ENCODE measurements at regions of chr11 and their contacts with region 1.

Region 1: GRCh38 chr11:87352759-87353707 is 315.3 kb downstream of the TMEM135 start:
- DNase-seq: peak; percentile 51
- ATAC-seq: peak; percentile 98
- H3K4me3 ChIP-seq: no peak overlapping the region; a peak in 1 of 6 replicates
- H3K27ac ChIP-seq: no peak overlapping the region
- H3K4me1 ChIP-seq: no peaks in the 10 kb centered on the region
- H3K27me3 ChIP-seq: no peaks in the 10 kb centered on the region
- CTCF ChIP-seq: peak; percentile 98
- EP300 ChIP-seq: no peak
- POLR2A ChIP-seq: no peak
- RAD21 ChIP-seq: peak; percentile 93

Region 2: DNA sequence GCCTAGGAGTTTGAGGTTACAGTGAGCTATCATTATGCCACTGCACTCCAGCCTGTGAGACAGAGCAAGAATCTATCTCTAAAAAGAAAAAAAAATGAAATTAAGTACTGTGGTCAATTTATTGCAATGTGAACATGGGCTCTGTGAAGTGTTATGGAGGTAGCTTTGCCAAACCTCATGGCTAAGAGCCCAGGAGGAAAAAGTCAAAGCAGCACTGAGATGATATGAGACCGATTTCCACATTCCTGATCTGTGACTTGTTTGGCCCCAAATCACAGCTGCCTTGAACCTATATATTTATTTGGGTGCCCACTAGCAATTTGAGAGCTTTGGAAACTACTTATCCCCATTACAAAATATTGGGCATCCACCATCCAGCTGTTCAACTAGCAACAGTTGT is 345.1 kb before region 1 on chr11:
- CTCF ChIA-PET with region 1: no interaction called
- POLR2A ChIA-PET with region 1: no interaction called
- in situ Hi-C with region 1: no loop called
- intact Hi-C with region 1: no loop called
- DNase-seq: no peak
- ATAC-seq: no peak
- H3K4me3 ChIP-seq: no peak overlapping the region
- H3K27ac ChIP-seq: no peak overlapping the region
- H3K4me1 ChIP-seq: peaks cover 61% of the 10 kb centered on the region
- H3K27me3 ChIP-seq: no peaks in the 10 kb centered on the region
- CTCF ChIP-seq: no peak
- EP300 ChIP-seq: no peak
- POLR2A ChIP-seq: no peak
- RAD21 ChIP-seq: no peak

Region 3: DNA sequence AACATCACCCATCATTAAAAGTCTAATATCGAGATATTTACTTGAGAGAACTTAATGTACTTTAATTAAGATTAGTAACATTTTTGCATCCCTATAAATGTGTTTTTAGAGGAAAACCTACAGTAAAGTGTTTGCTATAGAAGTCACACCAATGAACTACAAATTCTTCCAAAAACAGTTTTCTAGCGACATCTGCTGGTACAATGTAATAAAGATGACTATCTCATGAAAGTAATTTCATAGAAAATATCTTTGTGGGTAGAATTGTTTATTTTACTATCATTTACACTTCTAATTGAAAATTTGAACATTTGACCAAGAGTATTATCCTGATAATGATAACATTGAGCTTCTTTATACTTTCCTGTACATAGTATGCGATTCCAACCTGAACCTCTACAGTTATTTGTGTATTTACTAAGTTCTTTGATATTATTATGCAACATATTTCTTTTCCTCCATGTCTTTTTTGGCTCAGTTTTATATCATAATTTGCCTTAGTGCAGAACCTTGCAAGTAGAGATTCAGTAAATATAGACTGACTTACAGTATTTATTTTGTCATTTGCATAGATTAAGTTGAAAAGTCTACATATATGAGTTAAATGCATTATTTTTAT is 62.6 kb before region 1 on chr11:
- CTCF ChIA-PET with region 1: no interaction called
- POLR2A ChIA-PET with region 1: no interaction called
- in situ Hi-C with region 1: no loop called
- intact Hi-C with region 1: no loop called
- DNase-seq: peak; percentile 59
- ATAC-seq: no peak; the same call in 2 of the 3 replicates
- H3K4me3 ChIP-seq: no peak overlapping the region
- H3K27ac ChIP-seq: no peak overlapping the region
- H3K4me1 ChIP-seq: no peaks in the 10 kb centered on the region
- H3K27me3 ChIP-seq: no peaks in the 10 kb centered on the region
- CTCF ChIP-seq: peak; percentile 58
- EP300 ChIP-seq: no peak
- POLR2A ChIP-seq: no peak
- RAD21 ChIP-seq: peak; percentile 41; the same call in 1 of the 2 replicates

Region 4: DNA sequence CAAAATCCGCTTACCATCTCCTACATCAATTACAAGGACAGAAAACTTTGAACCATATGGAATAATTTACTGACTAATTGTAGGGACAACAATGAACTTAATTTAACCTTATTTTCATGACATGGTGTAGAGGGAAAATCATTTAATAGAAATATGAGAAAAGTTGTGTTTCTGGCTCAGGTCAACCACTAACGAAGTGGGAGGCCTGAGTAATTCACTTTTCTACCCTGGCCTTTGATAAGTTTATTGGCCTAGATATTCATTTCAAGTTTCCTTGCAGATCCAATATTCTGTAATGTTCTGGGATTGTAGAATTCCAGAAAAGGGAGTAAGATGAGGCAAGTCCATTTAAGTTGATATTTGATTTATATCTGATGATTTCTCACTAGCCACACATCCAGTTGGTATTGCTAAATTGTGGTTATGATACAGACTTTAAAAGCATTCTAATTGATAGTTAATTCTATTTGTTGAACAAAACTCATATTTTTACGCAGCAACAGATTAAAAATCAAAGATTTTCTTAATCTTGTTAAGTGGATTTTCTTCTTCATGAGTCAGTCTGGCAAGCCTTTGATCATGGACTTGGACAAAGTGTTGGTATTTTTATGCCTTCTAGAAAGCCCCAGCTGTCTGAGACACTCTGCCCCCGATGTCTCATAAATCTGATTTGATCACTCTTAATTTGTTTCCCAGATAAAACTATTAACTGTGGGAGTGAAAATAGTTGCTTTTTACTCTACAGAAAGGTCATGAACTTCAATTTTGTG is 21.2 kb after region 1 on chr11:
- CTCF ChIA-PET with region 1: no interaction called
- POLR2A ChIA-PET with region 1: no interaction called
- in situ Hi-C with region 1: no loop called
- intact Hi-C with region 1: no loop called
- DNase-seq: no peak
- ATAC-seq: no peak
- H3K4me3 ChIP-seq: no peak overlapping the region
- H3K27ac ChIP-seq: no peak overlapping the region
- H3K4me1 ChIP-seq: no peaks in the 10 kb centered on the region
- H3K27me3 ChIP-seq: peaks cover 1 to 9% of the 10 kb centered on the region in 2 experiments; a peak in 2 of 5 replicates
- CTCF ChIP-seq: no peak
- EP300 ChIP-seq: no peak
- POLR2A ChIP-seq: no peak
- RAD21 ChIP-seq: no peak

Region 5: GRCh38 chr11:87421422-87421821 is 68.4 kb after region 1 on chr11:
- CTCF ChIA-PET with region 1: interaction called, 30 read pairs
- POLR2A ChIA-PET with region 1: no interaction called
- in situ Hi-C with region 1: loop called (anchors 5 kb)
- intact Hi-C with region 1: loop called (anchors 1 kb)
- DNase-seq: peak; percentile 67
- ATAC-seq: peak; percentile 97
- H3K4me3 ChIP-seq: no peak overlapping the region
- H3K27ac ChIP-seq: no peak overlapping the region
- H3K4me1 ChIP-seq: no peaks in the 10 kb centered on the region
- H3K27me3 ChIP-seq: peaks cover 0 to 9% of the 10 kb centered on the region in 2 experiments; a peak in 2 of 5 replicates
- CTCF ChIP-seq: peak; percentile 86
- EP300 ChIP-seq: no peak
- POLR2A ChIP-seq: no peak
- RAD21 ChIP-seq: peak; percentile 61

Measured in HepG2 (cell line).